Activated T-helper 1 cell treated with anti-CD3 and anti-CD28 coated beads, Interleukin-12 subunit alpha, Interleukin-12 subunit beta, Interleukin-2, Interleukin-4 antibody, amounts not matched to agents 30 ng/mL and 10 ng/mL and 1 ng/mL, durations not matched to agents 14 hours and 24 hours and 36 hours (primary cell): ENCODE measurements at regions of chr10 and their contacts with region 1.

Region 1: DNA sequence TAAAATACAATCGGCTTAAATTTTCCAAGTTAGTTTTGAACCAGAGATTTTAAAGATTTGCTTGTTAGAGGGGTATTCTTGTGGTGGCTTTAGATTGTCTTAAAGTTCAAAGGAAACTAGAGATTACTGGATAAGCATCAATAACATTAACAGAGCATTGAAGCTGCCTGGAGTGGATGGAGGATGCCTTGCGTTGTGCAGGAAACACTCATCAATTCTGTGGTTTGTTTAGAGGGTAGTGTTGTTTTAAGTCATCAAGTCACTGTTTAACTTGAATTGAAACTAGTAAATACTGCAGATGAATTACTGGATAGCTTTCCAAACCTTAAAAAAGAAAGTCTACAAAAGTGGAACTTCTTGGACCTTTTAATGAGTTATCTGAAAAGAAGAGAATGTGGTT is 218.6 kb downstream of the CELF2 start:
- DNase-seq: no peak
- H3K4me3 Mint-ChIP-seq: peak overlapping the region; percentile 53
- H3K27ac Mint-ChIP-seq: peak overlapping the region; percentile 96
- H3K4me1 Mint-ChIP-seq: peaks cover 81% of the 10 kb centered on the region
- H3K27me3 Mint-ChIP-seq: no peaks in the 10 kb centered on the region

Region 2: DNA sequence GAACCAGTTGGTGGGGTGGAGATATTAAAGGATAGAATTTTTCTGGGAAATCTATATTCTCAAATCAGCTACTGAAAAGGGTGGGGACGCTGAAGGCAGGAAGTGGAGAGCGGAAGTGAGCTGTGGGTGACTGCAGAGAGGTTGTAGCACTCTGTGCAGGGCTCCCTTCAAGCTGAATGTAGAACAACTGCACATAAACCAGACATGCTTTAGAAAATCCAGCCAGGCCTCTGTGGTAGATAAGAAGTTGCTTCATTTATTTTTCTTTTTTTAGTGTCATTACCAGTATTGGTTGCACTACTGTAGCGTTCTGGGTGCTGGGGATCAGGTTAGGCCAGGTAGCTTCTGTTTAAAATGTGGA is 90.8 kb before region 1 on chr10:
- intact Hi-C with region 1: no loop called
- DNase-seq: peak; percentile 61
- H3K4me3 Mint-ChIP-seq: peak overlapping the region; percentile 82
- H3K27ac Mint-ChIP-seq: peak overlapping the region; percentile 98
- H3K4me1 Mint-ChIP-seq: peaks cover 92% of the 10 kb centered on the region
- H3K27me3 Mint-ChIP-seq: no peaks in the 10 kb centered on the region

Region 3: DNA sequence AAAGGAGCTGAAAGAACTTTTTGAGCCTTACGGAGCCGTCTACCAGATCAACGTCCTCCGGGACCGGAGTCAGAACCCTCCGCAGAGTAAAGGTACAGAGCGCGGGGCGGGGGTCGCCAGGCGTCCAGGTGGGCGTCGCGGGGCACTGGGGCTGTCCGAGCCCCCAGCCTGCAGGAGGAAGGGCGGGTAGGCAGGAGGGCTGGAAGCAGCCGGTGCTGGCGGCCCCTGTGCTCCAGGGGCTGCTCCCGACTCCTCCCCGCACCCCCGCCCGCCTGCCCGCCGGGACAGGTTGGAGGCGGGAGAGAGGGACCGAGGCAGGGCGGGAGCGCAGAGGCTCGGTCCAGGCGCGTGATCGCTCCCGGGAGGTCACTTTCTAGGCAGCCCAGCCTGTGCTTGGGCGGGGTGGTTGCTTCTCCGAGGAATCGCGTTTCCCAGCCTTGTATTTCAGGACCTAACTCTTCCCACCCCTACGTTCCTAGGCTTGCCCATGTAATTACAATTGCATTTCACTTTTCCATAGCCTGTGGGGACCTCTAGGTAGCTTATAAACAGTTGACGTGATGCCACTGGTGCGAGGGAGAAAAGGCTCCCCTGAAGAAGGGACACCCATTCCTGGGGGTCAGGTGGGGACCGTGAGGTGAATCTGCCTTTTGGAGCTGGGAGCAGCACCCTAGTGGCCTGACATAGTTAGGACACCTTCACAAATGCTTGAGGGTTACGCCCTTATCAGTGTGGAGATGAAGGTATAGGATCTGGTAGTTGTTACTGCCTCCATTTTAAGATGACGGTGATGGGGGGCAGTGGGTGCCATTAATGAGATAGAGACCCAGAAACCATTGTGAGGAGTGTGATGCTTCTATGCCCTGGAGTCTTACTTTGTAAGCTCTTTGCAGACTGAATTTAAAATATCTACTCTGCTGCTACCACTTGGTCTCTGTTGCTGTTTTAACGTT is 70.4 kb before region 1 on chr10:
- intact Hi-C with region 1: loop called (anchors 1 kb)
- DNase-seq: peak; percentile 70
- H3K4me3 Mint-ChIP-seq: no peak overlapping the region
- H3K27ac Mint-ChIP-seq: peak overlapping the region; percentile 98
- H3K4me1 Mint-ChIP-seq: peaks cover 35% of the 10 kb centered on the region
- H3K27me3 Mint-ChIP-seq: no peaks in the 10 kb centered on the region

Region 4: DNA sequence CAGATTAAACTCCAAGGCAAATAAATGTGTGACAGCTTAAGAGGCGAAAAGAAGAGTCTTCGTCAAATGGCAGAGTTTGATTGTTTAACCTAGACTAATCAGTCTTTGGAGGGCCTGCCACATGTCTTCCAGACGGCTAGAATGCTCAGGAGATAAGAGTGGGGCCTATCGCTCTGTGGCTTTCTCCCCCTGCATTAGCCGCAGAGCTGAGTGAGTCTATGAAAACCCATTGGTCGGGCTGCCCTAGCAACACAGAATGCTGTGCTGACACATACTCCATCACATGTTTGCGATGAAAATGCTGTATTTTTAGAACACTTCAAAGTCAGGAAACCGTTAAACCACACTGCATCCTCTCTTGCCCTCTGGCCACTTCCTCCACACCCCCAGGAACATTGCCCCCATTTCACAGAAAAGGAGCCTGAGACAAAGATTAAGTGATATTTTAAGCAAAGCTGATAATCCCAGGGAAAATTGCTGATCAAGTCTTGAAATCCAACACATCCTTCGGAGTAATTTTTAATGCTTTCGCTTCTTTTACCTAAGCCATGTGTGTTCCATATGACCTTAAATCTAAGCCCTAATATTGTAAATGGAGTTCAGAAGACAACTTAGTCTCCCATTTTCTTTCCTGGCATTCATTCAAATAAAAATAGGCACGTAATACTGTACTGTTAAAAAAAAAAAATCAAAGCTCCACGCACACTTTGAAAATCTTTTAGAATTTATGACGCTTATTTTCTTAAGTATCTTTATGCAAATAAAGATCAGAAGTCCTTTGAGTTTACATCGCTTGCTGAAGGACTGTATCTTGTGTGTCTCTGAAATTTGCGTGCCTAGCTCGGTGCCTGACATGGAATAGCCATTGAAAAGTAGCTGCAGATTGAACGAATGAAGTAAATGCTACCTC is 57.4 kb before region 1 on chr10:
- intact Hi-C with region 1: loop called (anchors 1 kb)
- DNase-seq: peak; percentile 88
- H3K4me3 Mint-ChIP-seq: no peak overlapping the region
- H3K27ac Mint-ChIP-seq: no peak overlapping the region
- H3K4me1 Mint-ChIP-seq: peaks cover 30% of the 10 kb centered on the region
- H3K27me3 Mint-ChIP-seq: no peaks in the 10 kb centered on the region

Region 5: DNA sequence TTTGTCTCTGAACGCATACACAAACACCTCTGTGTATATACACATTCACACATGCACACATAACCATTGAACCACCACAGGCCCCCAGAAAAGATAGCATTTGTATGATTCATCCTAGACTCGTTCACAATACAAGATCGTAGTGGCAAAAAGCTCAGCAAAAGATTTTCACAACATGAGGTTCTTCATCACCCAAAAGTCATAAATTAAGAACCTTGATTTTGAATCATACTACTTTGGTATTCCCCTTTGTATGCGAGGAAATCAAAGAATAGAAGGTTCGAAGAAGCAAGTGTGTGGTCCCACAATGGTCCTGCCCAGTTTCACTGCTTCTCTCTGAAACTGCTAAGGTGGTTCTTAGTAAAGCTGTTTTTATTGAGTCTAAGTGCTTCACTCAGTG is 17.8 kb before region 1 on chr10:
- intact Hi-C with region 1: loop called (anchors 1 kb)
- DNase-seq: no peak
- H3K4me3 Mint-ChIP-seq: no peak overlapping the region
- H3K27ac Mint-ChIP-seq: peak overlapping the region; percentile 87
- H3K4me1 Mint-ChIP-seq: peaks cover 95% of the 10 kb centered on the region
- H3K27me3 Mint-ChIP-seq: no peaks in the 10 kb centered on the region

Region 6: GRCh38 chr10:11261687-11262493 is 25.7 kb after region 1 on chr10:
- intact Hi-C with region 1: loop called (anchors 2 kb)
- DNase-seq: no peak
- H3K4me3 Mint-ChIP-seq: no peak overlapping the region
- H3K27ac Mint-ChIP-seq: peak overlapping the region; percentile 74
- H3K4me1 Mint-ChIP-seq: peaks cover 71% of the 10 kb centered on the region
- H3K27me3 Mint-ChIP-seq: no peaks in the 10 kb centered on the region

Region 7: GRCh38 chr10:11713186-11713743 is 477.0 kb after region 1 on chr10:
- intact Hi-C with region 1: loop called (anchors 10 kb)
- DNase-seq: no peak
- H3K4me3 Mint-ChIP-seq: no peak overlapping the region
- H3K27ac Mint-ChIP-seq: no peak overlapping the region
- H3K4me1 Mint-ChIP-seq: peaks cover 8% of the 10 kb centered on the region
- H3K27me3 Mint-ChIP-seq: peaks cover 76% of the 10 kb centered on the region